Naive thymus-derived CD4-positive, alpha-beta T cell (primary cell): ENCODE measurements at regions of chr5 and their contacts with region 1.

Region 1: GRCh38 chr5:150758531-150759333 is at the start of gene DCTN4:
- DNase-seq: peak; percentile 84 to 96 (median 94)
- ATAC-seq: peak; percentile 95
- H3K4me3 ChIP-seq: peak within 1 kb of the TSS; percentile 86
- H3K4me3 Mint-ChIP-seq: peak within 1 kb of the TSS in 3 of 10 donors; percentile 23 to 46 (median 36)
- H3K27ac ChIP-seq: peak within 1 kb of the TSS; percentile 96
- H3K27ac Mint-ChIP-seq: peak within 1 kb of the TSS in 1 of 9 donors; percentile 62
- H3K4me1 ChIP-seq: peaks cover 5 to 16% of the 10 kb centered on the region in 2 donors
- H3K4me1 Mint-ChIP-seq: peaks cover 22 to 54% (median 36%) of the 10 kb centered on the region in 7 donors
- H3K27me3 ChIP-seq: no peaks in the 10 kb centered on the region
- H3K27me3 Mint-ChIP-seq: peaks cover 0 to 5% (median 0%) of the 10 kb centered on the region in 5 donors
- total RNA-seq, gene DCTN4: 42.4 to 88.2 (median 46.9) TPM

Region 2: GRCh38 chr5:150000256-150000989 is 758.3 kb before region 1 on chr5 and contains the starts of genes HMGXB3 and TIGD6:
- CTCF ChIA-PET with region 1: no interaction called
- POLR2A ChIA-PET with region 1: no interaction called
- intact Hi-C with region 1: loop called in 1 of 2 experiments (anchors 5 kb)
- DNase-seq: peak; percentile 64 to 87 (median 74)
- ATAC-seq: peak; percentile 83
- H3K4me3 ChIP-seq: peak within 1 kb of the TSS; percentile 76
- H3K4me3 Mint-ChIP-seq: peak within 1 kb of the TSS; percentile 86 to 99 (median 93)
- H3K27ac ChIP-seq: peak within 1 kb of the TSS; percentile 80
- H3K27ac Mint-ChIP-seq: peak within 1 kb of the TSS; percentile 75 to 98 (median 94)
- H3K4me1 ChIP-seq: peaks cover 18 to 23% of the 10 kb centered on the region in 2 donors
- H3K4me1 Mint-ChIP-seq: peaks cover 33 to 55% (median 46%) of the 10 kb centered on the region in 7 donors
- H3K27me3 ChIP-seq: no peaks in the 10 kb centered on the region
- H3K27me3 Mint-ChIP-seq: no peaks in the 10 kb centered on the region
- total RNA-seq, gene HMGXB3: 27.2 to 40.6 (median 34.5) TPM
- total RNA-seq, gene TIGD6: 2.3 to 7.4 (median 2.8) TPM

Region 3: GRCh38 chr5:150449517-150450339 is 309.0 kb before region 1 on chr5 and contains the start of gene RPS14:
- CTCF ChIA-PET with region 1: no interaction called
- POLR2A ChIA-PET with region 1: interaction called, 4 read pairs
- intact Hi-C with region 1: loop called (anchors 1 kb)
- DNase-seq: peak; percentile 89 to 98 (median 97)
- ATAC-seq: peak; percentile 97
- H3K4me3 ChIP-seq: peak within 1 kb of the TSS; percentile 68
- H3K4me3 Mint-ChIP-seq: peak within 1 kb of the TSS; percentile 89 to 100 (median 96)
- H3K27ac ChIP-seq: peak within 1 kb of the TSS; percentile 100
- H3K27ac Mint-ChIP-seq: peak within 1 kb of the TSS; percentile 97 to 100 (median 100)
- H3K4me1 ChIP-seq: peaks cover 18 to 23% of the 10 kb centered on the region in 2 donors
- H3K4me1 Mint-ChIP-seq: peaks cover 21 to 44% (median 37%) of the 10 kb centered on the region in 7 donors
- H3K27me3 ChIP-seq: no peaks in the 10 kb centered on the region
- H3K27me3 Mint-ChIP-seq: no peaks in the 10 kb centered on the region
- total RNA-seq, gene RPS14: 2,331 to 7,378 (median 6,414) TPM

Region 4: GRCh38 chr5:150656191-150657132 is 102.3 kb before region 1 on chr5:
- CTCF ChIA-PET with region 1: interaction called, 3 read pairs
- POLR2A ChIA-PET with region 1: no interaction called
- intact Hi-C with region 1: loop called in 1 of 2 experiments (anchors 1 kb)
- DNase-seq: peak; percentile 74 to 88 (median 83)
- ATAC-seq: peak; percentile 96
- H3K4me3 ChIP-seq: peak overlapping the region; percentile 75
- H3K4me3 Mint-ChIP-seq: peak overlapping the region; percentile 75 to 90 (median 84)
- H3K27ac ChIP-seq: peak overlapping the region; percentile 63
- H3K27ac Mint-ChIP-seq: peak overlapping the region in 7 of 9 donors; percentile 17 to 74 (median 54)
- H3K4me1 ChIP-seq: peaks cover 0 to 4% of the 10 kb centered on the region in 2 donors
- H3K4me1 Mint-ChIP-seq: peaks cover 0 to 12% (median 5%) of the 10 kb centered on the region in 7 donors
- H3K27me3 ChIP-seq: no peaks in the 10 kb centered on the region
- H3K27me3 Mint-ChIP-seq: peaks cover 0 to 19% (median 0%) of the 10 kb centered on the region in 5 donors

Region 5: DNA sequence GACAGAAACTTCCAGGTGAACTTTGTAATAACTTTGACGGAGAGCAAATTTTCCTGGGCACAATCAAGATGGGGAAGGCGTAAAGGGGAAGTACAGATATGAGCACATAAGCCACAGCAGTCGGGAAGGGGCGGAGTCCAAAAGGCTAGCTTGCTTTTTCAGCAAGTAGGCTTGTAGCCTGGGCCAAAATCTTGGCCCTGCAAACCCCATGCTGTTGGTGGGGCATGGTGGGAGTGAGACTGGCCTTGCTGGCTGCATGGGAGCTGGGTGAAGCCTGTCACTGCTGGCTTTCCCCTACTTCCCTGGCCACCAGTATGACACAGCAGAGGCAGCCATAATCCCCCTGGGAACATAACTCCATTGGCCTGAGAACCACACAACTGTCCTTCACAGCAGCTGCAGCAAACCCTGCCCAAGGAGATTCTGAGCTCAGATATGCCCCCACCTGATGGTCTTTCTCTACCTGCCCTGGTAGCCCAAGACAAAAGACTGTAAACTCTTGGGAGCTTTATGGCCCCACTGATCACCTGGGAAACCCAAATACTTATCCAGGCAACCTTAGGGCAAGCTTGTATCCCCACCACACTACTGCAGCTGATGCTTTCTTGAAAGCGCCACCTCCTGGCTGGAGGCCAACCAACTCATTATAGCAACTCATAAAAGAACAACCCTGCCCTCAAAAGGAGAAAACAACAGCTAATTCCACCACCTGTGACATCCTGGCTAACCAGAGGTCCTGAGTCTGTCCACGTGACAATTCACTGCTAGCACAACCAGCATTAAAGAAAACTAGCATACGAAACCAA is 23.9 kb before region 1 on chr5:
- CTCF ChIA-PET with region 1: no interaction called
- POLR2A ChIA-PET with region 1: interaction called, 3 read pairs
- intact Hi-C with region 1: loop called in 1 of 2 experiments (anchors 1 kb)
- DNase-seq: no peak
- ATAC-seq: peak; percentile 84
- H3K4me3 ChIP-seq: no peak overlapping the region
- H3K4me3 Mint-ChIP-seq: no peak overlapping the region
- H3K27ac ChIP-seq: no peak overlapping the region
- H3K27ac Mint-ChIP-seq: peak overlapping the region in 3 of 9 donors; percentile 59 to 74 (median 68)
- H3K4me1 ChIP-seq: peaks cover 0 to 16% of the 10 kb centered on the region in 2 donors
- H3K4me1 Mint-ChIP-seq: peaks cover 39 to 54% (median 48%) of the 10 kb centered on the region in 7 donors
- H3K27me3 ChIP-seq: no peaks in the 10 kb centered on the region
- H3K27me3 Mint-ChIP-seq: no peaks in the 10 kb centered on the region

Region 6: DNA sequence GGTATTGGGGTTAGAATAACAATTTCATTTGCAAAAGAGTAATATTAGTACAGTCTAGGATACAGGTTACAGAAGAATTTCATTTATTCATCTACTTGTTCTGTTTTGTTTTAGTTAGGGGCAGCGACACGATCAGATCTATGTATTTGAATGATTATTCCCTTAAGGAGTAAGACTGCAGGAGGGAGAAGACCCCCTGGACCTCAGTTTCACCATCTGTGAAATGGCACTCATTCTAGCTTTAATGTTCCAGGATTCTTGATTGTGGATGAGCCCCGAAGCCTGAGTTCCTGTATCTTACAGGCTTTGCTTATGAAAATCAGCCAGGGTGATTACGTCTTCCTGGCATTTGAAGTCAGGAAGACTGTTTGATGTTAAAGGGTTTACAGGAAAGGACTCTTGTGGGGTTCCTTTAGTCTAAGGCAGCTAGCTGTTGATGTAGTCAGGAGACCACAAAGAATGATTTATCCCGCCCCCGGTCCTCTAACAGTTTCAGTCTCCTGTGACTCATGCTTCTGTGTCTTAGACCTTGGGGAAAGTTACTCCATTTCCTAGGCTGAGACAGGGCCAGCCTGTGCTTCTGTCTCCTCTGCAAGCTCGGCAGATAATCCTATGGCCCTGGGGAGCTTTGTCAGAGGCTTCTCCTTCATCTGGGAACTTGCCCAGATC is 31.3 kb after region 1 on chr5:
- CTCF ChIA-PET with region 1: interaction called, 3 read pairs
- POLR2A ChIA-PET with region 1: interaction called, 12 read pairs
- intact Hi-C with region 1: loop called in 1 of 2 experiments (anchors 1 kb)
- DNase-seq: peak in 8 of 9 donors; percentile 37 to 73 (median 63)
- ATAC-seq: peak; percentile 94
- H3K4me3 ChIP-seq: no peak overlapping the region
- H3K4me3 Mint-ChIP-seq: peak overlapping the region; percentile 46 to 77 (median 66)
- H3K27ac ChIP-seq: peak overlapping the region; percentile 19
- H3K27ac Mint-ChIP-seq: peak overlapping the region; percentile 63 to 95 (median 85)
- H3K4me1 ChIP-seq: peaks cover 0 to 15% of the 10 kb centered on the region in 2 donors
- H3K4me1 Mint-ChIP-seq: peaks cover 21 to 64% (median 56%) of the 10 kb centered on the region in 7 donors
- H3K27me3 ChIP-seq: no peaks in the 10 kb centered on the region
- H3K27me3 Mint-ChIP-seq: no peaks in the 10 kb centered on the region